Caco-2 (cell line): ENCODE measurements at regions of chr14 and their contacts with region 1.

Region 1: GRCh38 chr14:23057757-23058653 is 685 bp upstream of the CDH24 start:
- DNase-seq: peak; percentile 91 to 94
- H3K4me3 ChIP-seq: peak overlapping the region; percentile 56
- H3K4me3 Mint-ChIP-seq: peak overlapping the region; percentile 85
- H3K27ac Mint-ChIP-seq: peak overlapping the region; percentile 68
- H3K4me1 ChIP-seq: peaks cover 18% of the 10 kb centered on the region
- H3K4me1 Mint-ChIP-seq: peaks cover 23% of the 10 kb centered on the region
- H3K27me3 ChIP-seq: no peaks in the 10 kb centered on the region
- H3K27me3 Mint-ChIP-seq: no peaks in the 10 kb centered on the region
- CTCF ChIP-seq: peak; percentile 93 to 96

Region 2: DNA sequence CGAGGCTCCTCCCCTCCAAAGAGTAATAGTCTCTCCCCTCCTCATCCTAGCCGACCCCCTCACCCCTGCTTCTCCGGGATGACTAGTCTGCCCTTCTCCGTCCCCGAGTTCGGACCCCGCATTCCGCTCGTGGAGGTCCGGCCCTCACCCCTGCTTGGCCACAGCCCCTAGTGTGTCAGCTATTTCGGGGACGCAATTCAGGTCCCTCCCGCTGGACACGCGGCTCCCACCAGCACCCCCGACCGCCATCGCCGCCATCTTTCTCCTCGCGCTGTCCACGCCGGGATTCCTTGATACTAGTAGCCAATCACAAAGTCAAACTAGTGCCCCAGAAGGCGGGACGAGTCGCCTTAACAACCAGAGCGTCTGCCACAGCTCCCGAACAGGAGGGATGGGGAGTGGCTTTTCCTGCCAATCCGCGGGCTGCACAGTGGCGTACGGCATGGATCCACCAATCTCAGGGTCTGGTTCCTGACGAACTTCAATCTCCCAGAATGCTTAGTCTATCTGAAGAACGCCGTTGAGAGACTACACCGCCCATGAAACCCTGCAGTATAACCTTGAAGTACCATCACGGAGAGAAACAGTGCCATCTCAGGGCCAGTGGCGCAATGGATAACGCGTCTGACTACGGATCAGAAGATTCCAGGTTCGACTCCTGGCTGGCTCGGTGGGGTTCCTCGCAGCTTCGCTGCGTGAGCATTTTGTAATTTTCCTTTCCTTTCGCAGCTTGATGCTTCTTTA is 128.7 kb before region 1 on chr14 and contains the start of gene PRMT5:
- CTCF ChIA-PET with region 1: no interaction called
- POLR2A ChIA-PET with region 1: no interaction called
- intact Hi-C with region 1: loop called (anchors 2 kb)
- DNase-seq: peak; percentile 98 to 100
- H3K4me3 ChIP-seq: peak within 1 kb of the TSS; percentile 89
- H3K4me3 Mint-ChIP-seq: no peak within 1 kb of the TSS
- H3K27ac Mint-ChIP-seq: no peak within 1 kb of the TSS
- H3K4me1 ChIP-seq: peaks cover 14% of the 10 kb centered on the region; the same call in 1 of the 2 replicates
- H3K4me1 Mint-ChIP-seq: peaks cover 26% of the 10 kb centered on the region
- H3K27me3 ChIP-seq: no peaks in the 10 kb centered on the region
- H3K27me3 Mint-ChIP-seq: no peaks in the 10 kb centered on the region
- CTCF ChIP-seq: no peak
- total RNA-seq, gene PRMT5: 107 and 111 TPM in 2 replicates

Region 3: DNA sequence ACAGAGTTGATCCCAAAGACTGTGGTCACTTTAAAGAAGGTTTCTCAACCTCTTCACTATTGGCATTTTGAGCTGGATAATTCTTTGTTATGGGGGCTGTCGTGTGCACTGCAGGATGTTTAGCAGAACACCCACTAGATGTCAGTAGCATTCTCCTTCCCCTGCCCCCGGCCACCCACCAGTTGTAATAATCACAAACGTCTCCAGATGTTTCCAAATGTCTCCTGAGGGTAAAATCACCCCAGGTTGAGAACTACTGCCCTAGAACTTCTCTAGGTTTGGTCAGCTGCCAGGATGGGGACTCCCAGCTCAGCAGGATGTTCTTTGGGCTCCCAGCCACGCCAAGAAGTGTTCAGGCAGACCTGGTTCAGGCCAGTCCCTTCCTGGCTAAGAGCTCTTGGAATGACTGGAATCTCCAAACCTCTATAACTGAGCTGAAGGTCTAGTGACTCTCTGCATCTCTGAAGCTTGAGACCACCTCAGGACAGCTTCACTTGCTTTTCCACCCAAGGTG is 63.2 kb before region 1 on chr14:
- CTCF ChIA-PET with region 1: interaction called, 57 read pairs
- POLR2A ChIA-PET with region 1: interaction called, 7 read pairs
- intact Hi-C with region 1: loop called (anchors 1 kb)
- DNase-seq: peak in 1 of 2 experiments; percentile 56
- H3K4me3 ChIP-seq: no peak overlapping the region
- H3K4me3 Mint-ChIP-seq: peak overlapping the region; percentile 12
- H3K27ac Mint-ChIP-seq: peak overlapping the region; percentile 51
- H3K4me1 ChIP-seq: peaks cover 10% of the 10 kb centered on the region
- H3K4me1 Mint-ChIP-seq: peaks cover 3% of the 10 kb centered on the region
- H3K27me3 ChIP-seq: no peaks in the 10 kb centered on the region
- H3K27me3 Mint-ChIP-seq: no peaks in the 10 kb centered on the region
- CTCF ChIP-seq: peak; percentile 58 to 60

Region 4: GRCh38 chr14:23006544-23007419 is 51.2 kb before region 1 on chr14:
- CTCF ChIA-PET with region 1: interaction called, 34 read pairs
- POLR2A ChIA-PET with region 1: interaction called, 4 read pairs
- intact Hi-C with region 1: loop called (anchors 1 kb)
- DNase-seq: peak; percentile 97
- H3K4me3 ChIP-seq: peak overlapping the region; percentile 63
- H3K4me3 Mint-ChIP-seq: peak overlapping the region; percentile 100
- H3K27ac Mint-ChIP-seq: peak overlapping the region; percentile 99
- H3K4me1 ChIP-seq: peaks cover 14% of the 10 kb centered on the region
- H3K4me1 Mint-ChIP-seq: peaks cover 15% of the 10 kb centered on the region
- H3K27me3 ChIP-seq: no peaks in the 10 kb centered on the region
- H3K27me3 Mint-ChIP-seq: no peaks in the 10 kb centered on the region
- CTCF ChIP-seq: peak; percentile 13 to 44

Region 5: GRCh38 chr14:23095196-23096108 is 37.4 kb after region 1 on chr14 and contains the start of gene C14orf119:
- CTCF ChIA-PET with region 1: interaction called, 17 read pairs
- POLR2A ChIA-PET with region 1: interaction called, 10 read pairs
- intact Hi-C with region 1: no loop called
- DNase-seq: peak; percentile 98 to 99
- H3K4me3 ChIP-seq: peak within 1 kb of the TSS; percentile 79
- H3K4me3 Mint-ChIP-seq: no peak within 1 kb of the TSS
- H3K27ac Mint-ChIP-seq: no peak within 1 kb of the TSS
- H3K4me1 ChIP-seq: peaks cover 3% of the 10 kb centered on the region; the same call in 1 of the 2 replicates
- H3K4me1 Mint-ChIP-seq: peaks cover 10% of the 10 kb centered on the region
- H3K27me3 ChIP-seq: no peaks in the 10 kb centered on the region
- H3K27me3 Mint-ChIP-seq: no peaks in the 10 kb centered on the region
- CTCF ChIP-seq: no peak
- total RNA-seq, gene C14orf119: 46.3 and 52.0 TPM in 2 replicates

Region 6: GRCh38 chr14:23113431-23114119 is 55.6 kb after region 1 on chr14:
- CTCF ChIA-PET with region 1: interaction called, 6 read pairs
- POLR2A ChIA-PET with region 1: no interaction called
- intact Hi-C with region 1: loop called (anchors 1 kb)
- DNase-seq: no peak
- H3K4me3 ChIP-seq: no peak overlapping the region
- H3K4me3 Mint-ChIP-seq: no peak overlapping the region
- H3K27ac Mint-ChIP-seq: no peak overlapping the region
- H3K4me1 ChIP-seq: no peaks in the 10 kb centered on the region
- H3K4me1 Mint-ChIP-seq: no peaks in the 10 kb centered on the region
- H3K27me3 ChIP-seq: no peaks in the 10 kb centered on the region
- H3K27me3 Mint-ChIP-seq: no peaks in the 10 kb centered on the region
- CTCF ChIP-seq: no peak